HEK293 (cell line): ENCODE measurements at regions of chr1 and their contacts with region 1.

Region 1: GRCh38 chr1:22861764-22862440 is 110.8 kb downstream of the LACTBL1 start:
- H3K4me3 ChIP-seq: no peak overlapping the region
- H3K27ac ChIP-seq: no peak overlapping the region
- H3K4me1 ChIP-seq: no peaks in the 10 kb centered on the region
- CTCF ChIP-seq: peak; percentile 29; the same call in 1 of the 2 replicates

Region 2: DNA sequence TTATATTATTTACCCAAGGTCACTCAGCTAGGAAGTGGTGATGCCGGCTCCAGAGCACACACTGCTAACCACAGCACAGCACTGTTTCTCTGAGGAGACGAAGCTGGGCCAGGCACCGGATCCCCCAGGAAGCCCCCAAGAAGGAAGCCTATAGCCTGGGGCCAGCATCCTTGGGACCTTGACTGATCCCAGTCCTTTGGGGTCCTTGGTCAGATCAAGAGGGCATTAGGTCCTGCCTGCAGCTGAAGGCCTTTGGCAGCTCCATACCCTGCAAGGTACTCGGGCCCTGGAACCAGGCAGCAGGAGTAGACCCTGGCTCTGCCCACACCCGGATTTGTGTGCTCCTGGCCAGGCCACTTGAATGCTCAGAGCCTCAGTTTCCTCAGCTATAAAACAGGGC is 17.3 kb before region 1 on chr1:
- CTCF ChIA-PET with region 1: interaction called, 14 read pairs
- POLR2A ChIA-PET with region 1: no interaction called
- H3K4me3 ChIP-seq: no peak overlapping the region
- H3K27ac ChIP-seq: no peak overlapping the region
- H3K4me1 ChIP-seq: no peaks in the 10 kb centered on the region
- CTCF ChIP-seq: no peak

Region 3: GRCh38 chr1:22850681-22851080 is 11.2 kb before region 1 on chr1:
- CTCF ChIA-PET with region 1: interaction called, 25 read pairs
- POLR2A ChIA-PET with region 1: no interaction called
- H3K4me3 ChIP-seq: no peak overlapping the region
- H3K27ac ChIP-seq: no peak overlapping the region
- H3K4me1 ChIP-seq: no peaks in the 10 kb centered on the region
- CTCF ChIP-seq: no peak